ENCODE measurements at regions of chr2 and their contacts with region 1.

Region 1: GRCh38 chr2:227238238-227239237 is 74.1 kb downstream of the COL4A3 start:
- DNase-seq: no peak
- H3K4me3 ChIP-seq: no peak overlapping the region
- CTCF ChIP-seq: peak; percentile 88

Region 2: GRCh38 chr2:227125506-227125905 is 113.0 kb before region 1 on chr2:
- CTCF ChIA-PET with region 1: interaction called, 173 read pairs
- POLR2A ChIA-PET with region 1: no interaction called
- DNase-seq: no peak
- H3K4me3 ChIP-seq: no peak overlapping the region
- CTCF ChIP-seq: no peak

Region 3: GRCh38 chr2:227219312-227220105 is 19.0 kb before region 1 on chr2:
- CTCF ChIA-PET with region 1: interaction called, 34 read pairs
- POLR2A ChIA-PET with region 1: no interaction called
- DNase-seq: no peak
- H3K4me3 ChIP-seq: no peak overlapping the region
- CTCF ChIP-seq: no peak

Region 4: DNA sequence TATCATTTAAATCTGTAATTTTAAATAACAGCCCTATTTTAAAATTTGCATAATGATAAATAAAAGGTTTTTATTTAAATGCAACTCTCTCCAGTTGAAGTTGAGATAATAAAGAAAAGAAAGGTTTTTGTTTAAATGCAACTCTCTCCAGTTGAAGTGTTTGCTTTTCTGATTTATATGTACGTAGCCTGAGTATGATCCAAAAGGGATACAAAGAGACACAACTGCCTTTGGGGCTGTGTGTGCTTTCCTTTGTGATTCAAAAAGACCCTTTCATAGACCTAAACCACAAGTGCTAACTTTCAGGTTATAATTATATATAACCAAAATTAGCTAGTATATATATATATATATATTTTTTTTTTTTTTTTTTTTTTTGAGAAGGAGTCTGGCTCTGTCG is 10.3 kb after region 1 on chr2:
- CTCF ChIA-PET with region 1: interaction called, 16 read pairs
- POLR2A ChIA-PET with region 1: no interaction called
- DNase-seq: no peak
- H3K4me3 ChIP-seq: no peak overlapping the region
- CTCF ChIP-seq: no peak

Region 5: DNA sequence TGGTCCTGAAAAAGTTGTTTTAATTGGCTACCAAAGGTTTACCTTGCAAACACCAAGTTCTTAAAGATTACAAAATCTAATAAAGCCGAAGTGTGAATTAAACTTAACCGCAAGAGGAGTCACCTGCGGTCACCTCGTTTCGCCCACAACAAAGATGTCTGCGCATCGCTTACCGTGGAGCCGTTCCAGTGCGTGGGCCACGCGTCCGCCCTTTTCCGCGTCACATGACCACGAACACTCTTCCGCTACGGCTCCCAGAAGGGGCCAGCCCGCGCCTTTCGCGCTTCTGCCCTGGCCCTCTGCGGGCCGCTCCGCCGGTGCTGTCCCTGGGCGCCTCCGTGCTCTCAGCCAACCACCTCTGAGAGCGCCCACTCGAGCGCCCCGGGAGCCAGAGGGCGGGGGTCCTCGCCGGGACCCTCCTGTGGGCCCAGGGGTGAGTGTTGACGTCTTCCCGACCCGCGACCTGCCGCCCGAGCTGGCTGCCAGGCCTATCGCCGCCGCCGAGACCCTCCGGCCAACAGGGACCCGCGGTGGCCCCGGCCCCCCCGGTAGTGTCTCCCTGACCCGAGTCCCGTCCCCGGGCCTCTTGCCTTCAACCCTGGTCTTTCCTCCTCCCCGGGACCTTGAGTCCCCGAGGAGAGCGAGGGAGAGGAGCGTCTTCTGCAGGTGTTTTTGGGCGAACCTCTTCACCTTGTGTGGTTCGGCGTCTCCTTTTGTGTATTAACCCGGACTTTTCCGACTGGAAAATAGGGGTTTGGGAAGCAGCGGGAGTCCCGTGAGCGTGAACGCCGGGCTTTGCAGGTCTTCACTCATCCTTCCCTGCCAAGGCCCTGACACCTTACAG is 86.7 kb after region 1 on chr2 and contains the start of gene MFF:
- CTCF ChIA-PET with region 1: no interaction called
- POLR2A ChIA-PET with region 1: no interaction called
- DNase-seq: peak; percentile 60
- H3K4me3 ChIP-seq: peak within 1 kb of the TSS; percentile 65
- CTCF ChIP-seq: no peak